Prostate gland (tissue), 2 donors: ENCODE measurements at regions of chr4 and their contacts with region 1.

Region 1: GRCh38 chr4:99117876-99118693 is 26.0 kb downstream of the ADH4 start:
- DNase-seq: no peak
- H3K4me3 ChIP-seq: no peak overlapping the region
- H3K27ac ChIP-seq: no peak overlapping the region
- H3K4me1 ChIP-seq: no peaks in the 10 kb centered on the region
- H3K27me3 ChIP-seq: no peaks in the 10 kb centered on the region
- CTCF ChIP-seq: peak in 2 of 4 experiments; percentile 6 to 34
- POLR2A ChIP-seq: no peak

Region 2: GRCh38 chr4:99293357-99293756 is 175.3 kb after region 1 on chr4:
- intact Hi-C with region 1: loop called (anchors 10 kb)
- DNase-seq: no peak
- H3K4me3 ChIP-seq: no peak overlapping the region
- H3K27ac ChIP-seq: no peak overlapping the region
- H3K4me1 ChIP-seq: no peaks in the 10 kb centered on the region
- H3K27me3 ChIP-seq: no peaks in the 10 kb centered on the region
- CTCF ChIP-seq: no peak
- POLR2A ChIP-seq: no peak